Endothelial cell of umbilical vein (primary cell): ENCODE measurements at regions of chr4 and their contacts with region 1.

Region 1: GRCh38 chr4:55116450-55116849 is 8.9 kb downstream of the KDR start:
- DNase-seq: peak; percentile 66
- H3K4me3 ChIP-seq: no peak overlapping the region
- H3K27ac ChIP-seq: no peak overlapping the region
- H3K4me1 ChIP-seq: peaks cover 60% of the 10 kb centered on the region
- H3K27me3 ChIP-seq: no peaks in the 10 kb centered on the region
- CTCF ChIP-seq: no peak
- POLR2A ChIP-seq: no peak

Region 2: DNA sequence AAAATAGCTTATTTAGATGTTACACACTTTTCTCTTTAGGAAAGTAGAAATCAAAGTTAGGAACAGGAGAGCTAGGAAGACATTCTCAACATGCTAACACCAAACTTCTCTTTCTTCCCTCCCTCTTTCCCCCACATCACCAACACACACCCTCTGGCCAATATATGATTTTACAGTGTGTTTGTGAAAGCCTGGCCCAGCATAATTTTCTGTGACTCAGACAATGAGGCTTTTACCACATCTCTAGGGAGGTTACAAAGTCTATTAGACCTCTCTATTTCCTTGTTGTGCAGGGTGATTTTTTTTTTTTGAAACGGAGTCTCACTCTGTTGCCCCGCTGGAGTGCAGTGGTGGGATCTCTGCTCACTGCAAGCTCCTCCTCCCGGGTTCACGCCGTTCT is 1080.9 kb after region 1 on chr4:
- CTCF ChIA-PET with region 1: no interaction called
- POLR2A ChIA-PET with region 1: no interaction called
- dilution Hi-C with region 1: no loop called
- intact Hi-C with region 1: loop called (anchors 5 kb)
- DNase-seq: no peak
- H3K4me3 ChIP-seq: no peak overlapping the region
- H3K27ac ChIP-seq: no peak overlapping the region
- H3K4me1 ChIP-seq: peaks cover 5% of the 10 kb centered on the region
- H3K27me3 ChIP-seq: no peaks in the 10 kb centered on the region
- CTCF ChIP-seq: no peak
- POLR2A ChIP-seq: no peak